Pancreas (tissue), 10 donors: ENCODE measurements at regions of chr17 and their contacts with region 1.

Region 1: DNA sequence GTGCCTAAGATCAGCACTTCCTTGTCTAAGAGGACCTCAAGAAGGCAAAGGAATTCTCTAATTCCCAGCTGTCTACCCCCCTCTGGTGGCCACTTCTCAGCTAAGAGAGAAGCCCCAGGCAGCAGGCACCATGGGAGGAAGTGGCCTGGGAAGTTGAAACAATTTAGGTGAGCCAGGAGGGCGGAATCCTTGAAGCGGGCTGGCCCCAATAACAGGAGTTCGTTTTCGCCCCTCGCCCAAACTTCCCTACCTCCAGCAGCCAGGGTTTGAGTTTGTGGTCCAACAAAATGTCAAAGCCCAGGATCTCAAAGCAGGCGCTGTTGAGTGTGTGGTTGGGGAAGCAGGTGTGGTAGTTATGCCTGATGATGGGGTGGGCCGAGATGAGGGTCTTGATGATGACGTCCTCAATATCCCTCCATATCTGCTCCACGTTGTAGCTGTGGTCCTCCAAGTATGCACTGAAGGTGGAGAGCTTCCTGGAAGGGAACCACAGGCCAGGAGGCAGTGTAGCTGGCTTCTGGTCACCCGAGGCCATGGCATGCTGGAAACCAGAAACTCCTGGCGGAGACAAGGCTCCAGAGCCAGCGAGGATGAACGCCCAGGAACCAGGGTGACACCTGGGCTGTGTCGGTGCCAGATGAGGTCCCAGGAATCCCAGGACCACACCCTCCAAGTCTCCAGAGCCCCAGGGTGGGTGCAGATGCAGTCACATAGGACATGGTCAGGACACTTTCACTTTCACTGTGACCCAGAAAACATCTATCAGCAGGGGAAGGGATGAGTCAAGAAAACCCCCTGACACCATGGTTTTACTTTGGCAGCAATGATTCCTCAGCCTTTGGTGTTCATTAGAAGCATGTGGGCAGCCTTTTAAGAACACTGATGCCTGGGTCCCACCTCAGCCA is 25.6 kb downstream of the TTLL6 start:
- DNase-seq: peak; percentile 57 to 80 (median 67)
- ATAC-seq: peak; percentile 79 to 93 (median 88)
- H3K4me3 ChIP-seq: no peak overlapping the region
- H3K27ac ChIP-seq: no peak overlapping the region
- H3K4me1 ChIP-seq: peaks cover 0 to 6% (median 5%) of the 10 kb centered on the region in 3 donors
- H3K27me3 ChIP-seq: no peaks in the 10 kb centered on the region
- CTCF ChIP-seq: peak; percentile 52 to 73 (median 66)

Region 2: GRCh38 chr17:48678141-48678971 is 113.0 kb before region 1 on chr17:
- intact Hi-C with region 1: loop called in 2 of 3 experiments (anchors 5 to 10 kb)
- DNase-seq: peak; percentile 36 to 93 (median 74)
- ATAC-seq: peak; percentile 85 to 100 (median 98)
- H3K4me3 ChIP-seq: peak overlapping the region in 1 of 4 donors; percentile 2
- H3K27ac ChIP-seq: no peak overlapping the region
- H3K4me1 ChIP-seq: no peaks in the 10 kb centered on the region
- H3K27me3 ChIP-seq: peaks cover 0 to 9% (median 3%) of the 10 kb centered on the region in 4 donors
- CTCF ChIP-seq: peak; percentile 89 to 96 (median 94)

Region 3: DNA sequence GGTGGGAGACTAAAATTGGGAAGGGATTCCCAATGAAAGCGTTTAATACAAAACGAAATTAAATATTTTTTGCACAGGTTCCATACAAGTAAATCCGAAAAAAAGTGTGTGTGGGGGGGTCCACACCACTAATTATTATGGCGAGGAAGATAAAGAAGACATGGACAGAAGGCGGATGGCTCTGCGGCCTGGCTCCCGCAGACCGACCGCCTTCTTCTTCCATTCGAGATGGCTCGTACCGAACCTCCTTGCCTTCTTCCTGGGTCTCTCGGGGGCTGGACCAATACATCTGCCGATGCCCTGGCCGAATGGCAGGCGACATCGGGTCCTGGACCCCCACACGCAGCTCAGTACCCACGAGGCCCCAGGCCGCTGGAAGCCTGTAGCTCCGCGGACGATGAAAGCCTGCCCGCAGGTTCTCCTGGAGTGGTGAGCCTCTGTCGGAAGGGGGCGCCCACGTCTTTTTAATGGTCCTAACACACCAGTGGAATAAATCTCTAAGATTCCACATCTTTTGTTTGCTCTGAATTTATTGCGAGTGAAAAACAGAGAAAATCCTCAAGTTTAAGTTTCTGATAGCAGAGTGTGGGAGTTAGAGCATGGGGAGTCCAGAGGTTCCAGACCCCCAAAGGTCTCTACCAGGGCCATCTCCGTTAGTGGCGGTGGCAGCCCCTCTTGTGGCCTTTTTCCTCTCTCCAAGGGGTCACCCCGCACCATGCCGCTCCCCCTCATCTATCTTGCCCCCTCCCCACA is 67.0 kb before region 1 on chr17:
- intact Hi-C with region 1: loop called in 1 of 3 experiments (anchors 5 kb)
- DNase-seq: peak; percentile 72 to 95 (median 86)
- ATAC-seq: peak; percentile 82 to 94 (median 92)
- H3K4me3 ChIP-seq: no peak overlapping the region
- H3K27ac ChIP-seq: no peak overlapping the region
- H3K4me1 ChIP-seq: peaks cover 0 to 5% (median 0%) of the 10 kb centered on the region in 3 donors
- H3K27me3 ChIP-seq: peaks cover 8 to 81% (median 26%) of the 10 kb centered on the region in 4 donors
- CTCF ChIP-seq: peak in 3 of 4 donors; percentile 61